ENCODE measurements at regions of chr5 and their contacts with region 1.

Region 1: DNA sequence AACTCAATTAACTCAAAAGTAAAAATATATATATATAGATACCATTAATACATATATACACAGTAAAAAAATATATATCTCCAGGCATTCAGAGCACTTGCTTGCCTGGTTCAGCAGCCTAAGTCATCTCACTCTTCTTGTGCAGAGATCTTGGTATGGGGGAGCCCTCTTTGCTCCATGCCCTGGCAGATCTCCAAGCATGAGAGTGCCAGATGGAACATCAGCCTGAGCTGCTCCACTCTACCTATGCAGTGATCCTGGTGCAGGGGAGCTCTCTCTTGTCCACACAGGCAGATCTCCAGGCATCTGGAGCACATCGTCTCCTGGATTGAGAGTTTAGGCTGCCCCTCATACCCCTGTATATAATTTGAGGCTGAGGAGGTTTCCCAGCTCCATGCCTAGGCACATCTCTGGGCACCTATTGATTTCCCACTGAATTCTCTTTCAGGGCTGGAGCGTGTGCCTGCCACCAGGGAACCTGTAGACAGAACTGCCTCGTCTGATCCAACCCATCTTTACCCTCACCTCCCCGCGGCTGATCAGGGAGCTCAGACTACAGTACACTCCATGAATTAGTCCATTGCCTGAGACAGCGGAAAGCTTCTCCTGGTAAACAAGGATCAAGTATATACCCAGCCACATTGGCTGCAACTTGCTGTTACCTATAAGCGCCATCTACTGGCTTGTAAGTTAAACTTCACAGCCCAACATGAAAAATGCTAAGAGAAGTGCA is 342.4 kb upstream of the GRIA1 start:
- DNase-seq: peak; percentile 81
- H3K4me3 ChIP-seq: peak overlapping the region; percentile 17
- H3K27ac ChIP-seq: no peak overlapping the region
- H3K4me1 ChIP-seq: no peaks in the 10 kb centered on the region
- H3K27me3 ChIP-seq: no peaks in the 10 kb centered on the region
- CTCF ChIP-seq: peak; percentile 84

Region 2: DNA sequence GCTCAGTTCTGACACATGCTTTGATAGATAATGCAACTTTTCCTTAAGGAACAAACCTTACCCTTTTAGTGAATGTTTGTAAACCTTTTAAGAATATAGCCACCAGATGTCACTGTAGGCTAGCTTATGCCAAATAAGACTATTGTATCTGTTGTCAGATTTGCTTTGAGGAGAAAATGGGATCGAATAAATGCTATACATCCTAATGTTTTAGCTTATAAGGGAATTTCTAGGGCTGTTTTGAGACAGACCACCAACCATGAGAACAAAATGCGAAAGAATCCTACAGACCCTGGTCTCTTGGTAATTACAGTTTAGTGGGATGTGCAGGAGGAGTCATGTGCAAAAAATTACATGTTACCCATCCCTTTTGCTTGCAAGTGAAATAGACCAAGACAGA is 615.3 kb before region 1 on chr5:
- CTCF ChIA-PET with region 1: no interaction called
- POLR2A ChIA-PET with region 1: interaction called, 3 read pairs
- intact Hi-C with region 1: loop called (anchors 2 kb)
- DNase-seq: peak; percentile 62
- H3K4me3 ChIP-seq: no peak overlapping the region
- H3K27ac ChIP-seq: no peak overlapping the region
- H3K4me1 ChIP-seq: no peaks in the 10 kb centered on the region
- H3K27me3 ChIP-seq: no peaks in the 10 kb centered on the region
- CTCF ChIP-seq: peak; percentile 61

Region 3: DNA sequence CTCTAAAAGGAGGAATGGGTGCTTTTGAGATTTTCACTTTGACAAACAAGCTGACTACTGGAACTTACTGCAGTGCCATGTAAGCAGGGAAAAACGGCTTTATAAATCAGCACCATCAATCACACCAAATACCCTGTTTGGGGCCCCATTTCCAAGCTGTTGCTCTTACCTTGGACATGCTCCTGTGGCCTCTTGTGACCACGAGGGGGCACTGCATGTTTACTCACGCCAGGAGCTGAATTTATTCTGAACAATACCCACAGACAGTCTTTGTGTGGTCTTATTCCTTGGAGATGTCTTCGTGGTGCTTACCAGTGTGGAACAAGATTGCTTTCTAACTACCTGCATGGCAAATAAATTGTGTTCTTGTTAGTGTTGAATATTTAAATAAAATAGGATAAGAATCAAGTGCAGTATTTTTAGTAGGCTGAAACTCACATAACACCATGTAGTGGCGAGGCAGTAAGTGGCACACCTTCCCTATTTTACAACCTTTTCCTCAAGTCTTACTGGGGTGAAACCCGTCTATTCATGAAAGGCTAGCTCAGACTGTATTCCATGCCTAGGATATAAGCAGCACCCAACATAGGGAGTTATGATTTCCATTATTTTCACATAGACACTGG is 587.4 kb before region 1 on chr5:
- CTCF ChIA-PET with region 1: interaction called, 21 read pairs
- POLR2A ChIA-PET with region 1: no interaction called
- intact Hi-C with region 1: loop called (anchors 1 kb)
- DNase-seq: peak; percentile 63
- H3K4me3 ChIP-seq: no peak overlapping the region
- H3K27ac ChIP-seq: no peak overlapping the region
- H3K4me1 ChIP-seq: no peaks in the 10 kb centered on the region
- H3K27me3 ChIP-seq: no peaks in the 10 kb centered on the region
- CTCF ChIP-seq: peak; percentile 81

Region 4: GRCh38 chr5:152811988-152812387 is 336.1 kb before region 1 on chr5:
- CTCF ChIA-PET with region 1: no interaction called
- POLR2A ChIA-PET with region 1: no interaction called
- intact Hi-C with region 1: loop called (anchors 10 kb)
- DNase-seq: no peak
- H3K4me3 ChIP-seq: no peak overlapping the region
- H3K27ac ChIP-seq: no peak overlapping the region
- H3K4me1 ChIP-seq: no peaks in the 10 kb centered on the region
- H3K27me3 ChIP-seq: no peaks in the 10 kb centered on the region
- CTCF ChIP-seq: no peak